GM10248 (cell line): ENCODE measurements at regions of chr2 and their contacts with region 1.

Region 1: DNA sequence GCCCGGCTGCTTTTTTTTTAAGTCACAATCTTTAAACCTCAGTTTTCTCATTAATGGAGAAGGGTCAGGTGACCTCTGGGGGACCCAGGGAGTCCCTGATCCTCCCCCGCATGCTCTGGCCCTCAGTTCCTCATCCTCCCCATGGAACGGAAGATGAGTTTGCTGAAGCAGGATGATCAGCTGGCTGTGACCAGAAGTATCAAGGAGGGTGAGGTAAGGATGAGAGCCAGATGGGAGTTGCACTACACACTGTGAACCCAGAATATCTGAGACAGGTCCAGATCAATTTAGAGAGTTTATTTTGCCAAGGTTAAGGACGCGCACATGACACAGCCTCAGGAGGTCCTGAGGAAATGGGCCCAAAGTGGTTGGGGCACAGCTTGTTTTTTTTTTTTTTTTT is 3.8 kb downstream of the CATIP start:
- DNase-seq: no peak
- CTCF ChIP-seq: no peak

Region 2: GRCh38 chr2:218292048-218293014 is 68.1 kb before region 1 on chr2 and contains the start of gene TMBIM1:
- CTCF ChIA-PET with region 1: interaction called, 38 read pairs
- POLR2A ChIA-PET with region 1: no interaction called
- DNase-seq: peak; percentile 93
- CTCF ChIP-seq: peak; percentile 86

Region 3: DNA sequence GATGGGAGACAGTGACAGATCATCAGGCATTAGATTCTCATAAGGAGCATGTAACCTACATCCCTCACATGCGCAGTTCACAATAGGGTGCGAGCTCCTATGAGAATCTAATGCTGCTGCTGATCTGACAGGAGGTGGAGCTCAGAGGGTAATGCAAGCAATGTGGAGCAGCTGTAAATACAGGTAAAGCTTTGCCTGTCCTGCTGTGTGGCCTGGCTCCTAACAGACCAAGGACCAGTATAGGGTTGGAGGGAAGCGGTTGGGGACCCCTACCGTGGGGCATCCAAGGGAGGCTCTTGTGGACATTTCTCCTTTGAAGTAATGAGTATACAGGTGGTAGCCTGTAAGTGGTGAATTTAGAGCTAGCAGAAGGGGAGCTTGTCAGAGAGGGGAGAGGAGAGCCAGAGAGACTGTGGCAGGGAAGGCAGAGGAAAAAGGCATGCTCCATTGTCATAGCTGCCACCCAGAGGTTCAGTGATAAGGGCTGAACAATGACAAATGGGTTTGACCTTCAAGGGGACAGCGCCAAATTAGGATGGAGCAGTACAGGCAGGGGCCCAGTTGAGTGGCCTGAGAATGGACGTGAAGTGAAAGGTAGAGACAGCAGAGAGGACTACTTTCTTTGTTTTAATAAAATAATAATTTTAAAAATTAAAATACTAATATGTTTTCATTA is 52.9 kb before region 1 on chr2:
- CTCF ChIA-PET with region 1: interaction called, 76 read pairs
- POLR2A ChIA-PET with region 1: no interaction called
- DNase-seq: no peak
- CTCF ChIP-seq: no peak

Region 4: DNA sequence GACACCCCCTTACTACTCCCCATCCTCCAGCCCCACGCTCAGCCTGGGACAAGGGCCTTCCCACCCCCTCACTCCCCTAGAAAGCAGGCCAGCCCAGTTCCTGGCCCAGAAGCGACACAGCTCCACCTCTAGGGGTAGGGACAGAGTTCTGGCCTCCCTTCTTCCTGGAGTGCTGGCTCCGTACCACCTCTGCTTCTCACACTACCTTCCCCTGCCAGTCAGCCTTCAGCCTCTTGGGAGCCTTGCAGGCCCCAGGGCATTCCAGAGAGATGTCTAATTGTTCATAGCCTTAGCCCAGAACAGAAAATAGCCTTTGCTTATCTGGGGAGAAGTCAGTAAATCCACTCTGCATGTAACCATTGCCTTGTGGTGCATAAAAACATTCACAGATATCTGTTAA is 16.9 kb before region 1 on chr2:
- CTCF ChIA-PET with region 1: interaction called, 16 read pairs
- POLR2A ChIA-PET with region 1: no interaction called
- DNase-seq: no peak
- CTCF ChIP-seq: no peak

Region 5: DNA sequence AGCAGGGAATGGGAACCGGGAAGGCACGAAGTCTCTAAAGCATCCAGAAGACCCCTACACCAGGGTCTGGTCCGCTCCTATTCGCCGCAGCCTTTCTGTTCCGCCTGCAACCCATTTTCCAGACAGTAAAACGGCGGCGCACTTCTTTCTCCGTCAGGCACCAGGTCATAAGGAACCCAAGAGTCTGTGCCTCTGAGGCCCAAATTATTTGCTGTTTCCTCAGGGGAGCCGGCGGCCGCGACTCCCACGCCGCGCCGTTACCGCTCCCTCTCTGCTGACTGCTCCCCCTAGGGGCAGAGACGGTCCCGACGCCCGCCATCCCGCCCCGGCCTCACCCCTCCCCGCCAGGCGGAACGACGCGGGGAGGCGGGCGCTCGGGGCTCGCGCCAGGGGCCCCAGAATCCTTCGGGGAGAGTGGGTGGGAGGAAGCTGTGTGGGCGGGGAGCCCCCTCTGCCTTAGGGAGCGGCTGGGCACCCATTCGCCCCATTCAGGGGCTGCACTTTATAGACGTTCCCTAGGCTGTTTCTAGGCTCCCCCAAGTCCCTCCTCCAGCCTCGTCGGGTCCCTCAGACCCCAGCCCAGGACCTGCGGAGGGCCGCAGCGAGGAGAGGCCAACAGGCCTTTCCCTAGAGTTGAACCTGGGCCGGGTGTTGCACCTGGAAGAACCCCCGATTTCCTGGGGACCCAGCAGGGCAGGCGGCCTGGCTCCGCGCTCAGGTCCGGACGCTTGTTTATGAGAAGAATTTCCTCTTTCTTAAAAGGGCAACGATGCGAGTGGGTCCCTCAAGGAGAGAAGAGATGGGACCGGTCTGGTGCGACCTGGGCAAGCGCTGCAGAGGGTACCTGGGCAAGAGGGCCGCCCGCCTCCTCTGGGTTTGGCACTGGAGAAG is 35.6 kb after region 1 on chr2:
- CTCF ChIA-PET with region 1: interaction called, 12 read pairs
- POLR2A ChIA-PET with region 1: no interaction called
- DNase-seq: peak; percentile 93
- CTCF ChIP-seq: peak; percentile 77